ENCODE measurements at regions of chr19 and their contacts with region 1.

Region 1: GRCh38 chr19:33883859-33884519 is 87.3 kb downstream of the KCTD15 start:
- DNase-seq: no peak
- H3K4me3 ChIP-seq: 0 out of 2 replicates have a peak overlapping the region, but pooled peaks have one; percentile 2
- H3K27ac ChIP-seq: no peak overlapping the region
- H3K27me3 ChIP-seq: peaks cover 6% of the 10 kb centered on the region
- CTCF ChIP-seq: no peak

Region 2: DNA sequence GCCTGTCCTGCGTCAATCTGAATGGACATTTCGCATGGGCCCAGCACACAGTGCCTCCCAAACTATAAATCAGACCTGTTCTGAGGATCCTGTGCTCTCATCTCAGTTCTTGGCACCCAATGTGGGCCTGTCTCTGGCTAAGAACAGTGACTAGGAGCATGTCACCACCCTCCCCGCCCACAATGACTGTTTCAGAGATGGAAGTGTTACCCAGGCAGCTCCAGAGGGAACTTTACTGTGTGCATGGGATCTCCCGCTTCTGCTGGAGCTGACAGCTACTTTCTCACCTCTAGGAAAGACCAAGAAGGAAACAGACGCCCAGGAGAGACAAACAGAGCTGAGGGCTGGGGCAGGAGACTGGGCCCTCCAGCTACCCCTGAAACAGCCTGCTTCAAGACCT is 42.3 kb before region 1 on chr19:
- CTCF ChIA-PET with region 1: no interaction called
- POLR2A ChIA-PET with region 1: no interaction called
- DNase-seq: no peak
- H3K4me3 ChIP-seq: no peak overlapping the region
- H3K27ac ChIP-seq: no peak overlapping the region
- H3K27me3 ChIP-seq: peaks cover 3% of the 10 kb centered on the region
- CTCF ChIP-seq: no peak

Region 3: DNA sequence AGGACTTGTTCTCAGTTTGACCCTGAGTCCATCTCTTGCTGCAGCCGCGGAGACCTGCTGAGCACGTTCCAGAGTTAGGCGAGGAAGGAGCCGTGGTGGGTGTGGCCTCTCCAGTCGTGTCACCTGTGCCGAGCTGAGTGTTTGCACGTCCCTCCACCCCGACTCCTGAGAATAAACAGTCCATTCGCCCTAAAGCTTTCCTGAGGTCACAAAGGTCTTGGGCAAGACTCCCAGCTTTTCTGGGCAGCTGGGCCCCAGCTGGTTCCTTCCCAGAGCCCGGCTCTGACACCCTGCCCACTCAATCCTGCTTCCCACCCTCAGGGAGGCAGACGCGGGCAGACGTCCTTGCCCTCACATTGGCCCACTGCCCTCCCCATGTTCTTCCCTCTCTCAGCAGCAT is 54.8 kb after region 1 on chr19:
- CTCF ChIA-PET with region 1: no interaction called
- POLR2A ChIA-PET with region 1: no interaction called
- DNase-seq: no peak
- H3K4me3 ChIP-seq: no peak overlapping the region
- H3K27ac ChIP-seq: no peak overlapping the region
- H3K27me3 ChIP-seq: no peaks in the 10 kb centered on the region
- CTCF ChIP-seq: no peak

Region 4: GRCh38 chr19:34926685-34927375 is 1042.8 kb after region 1 on chr19 and contains the start of gene ZNF30:
- CTCF ChIA-PET with region 1: no interaction called
- POLR2A ChIA-PET with region 1: interaction called, 10 read pairs
- DNase-seq: peak; percentile 78
- H3K4me3 ChIP-seq: peak within 1 kb of the TSS; percentile 82
- H3K27ac ChIP-seq: peak within 1 kb of the TSS; percentile 70
- H3K27me3 ChIP-seq: no peaks in the 10 kb centered on the region
- CTCF ChIP-seq: no peak
- polyA plus RNA-seq, gene ZNF30: 2.1 and 3.1 TPM in 2 replicates

Measured in AG04450 (cell line).